ENCODE measurements at regions of chr3 and their contacts with region 1.

Region 1: GRCh38 chr3:52070724-52071621 is 14.6 kb upstream of the DUSP7 start:
- DNase-seq: peak; percentile 79
- ATAC-seq: peak; percentile 92

Region 2: GRCh38 chr3:52123106-52123725 is 52.2 kb after region 1 on chr3:
- intact Hi-C with region 1: loop called (anchors 10 kb)
- DNase-seq: peak; percentile 86
- ATAC-seq: peak; percentile 81